PC-9 (cell line): ENCODE measurements at regions of chr5 and their contacts with region 1.

Region 1: DNA sequence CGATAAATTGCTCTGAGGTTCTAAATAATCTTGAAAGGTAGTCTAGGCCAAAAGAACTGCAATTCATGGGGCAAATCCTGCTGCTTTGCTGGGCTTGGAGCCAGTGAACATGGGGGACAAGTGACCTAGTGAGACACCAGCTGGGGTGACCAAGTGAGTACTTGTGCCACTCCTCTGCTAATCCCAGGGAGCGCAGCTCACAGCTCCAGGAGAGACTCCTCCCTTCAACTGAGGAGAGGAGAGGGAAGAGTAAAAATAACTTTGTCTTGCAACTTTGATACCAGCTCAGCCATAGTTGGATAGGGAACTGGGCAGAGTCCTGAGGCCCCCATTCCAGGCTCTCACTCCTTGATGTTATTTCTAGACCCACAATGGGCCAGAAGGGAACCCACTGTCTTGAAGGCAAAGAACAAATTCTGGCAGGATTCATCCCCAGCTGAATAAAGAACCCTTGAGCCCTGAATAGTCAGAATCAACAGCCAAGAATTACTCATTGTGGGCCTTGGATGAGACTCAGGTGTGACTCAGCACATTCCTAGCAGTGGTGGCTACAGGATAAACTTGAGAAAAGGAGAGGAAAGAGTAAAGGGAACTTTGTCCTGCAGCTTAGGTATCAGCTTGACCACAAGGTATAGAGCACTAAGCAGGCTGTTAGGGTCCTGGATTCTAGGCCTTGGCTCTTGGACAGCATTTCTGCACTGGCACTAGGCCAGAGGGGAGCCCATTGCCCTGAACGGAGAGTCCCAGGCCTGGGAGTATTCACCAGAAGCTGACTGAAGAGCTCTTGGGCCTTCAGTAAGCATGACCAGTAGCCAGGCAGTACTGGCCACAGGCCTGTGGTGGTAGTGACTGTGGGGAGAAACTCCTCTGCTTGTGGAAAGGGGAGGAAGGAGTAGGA is 288.3 kb upstream of the CDH18 start:
- DNase-seq: peak; percentile 77 to 80
- H3K4me3 ChIP-seq: no peak overlapping the region
- H3K27ac ChIP-seq: peak overlapping the region; percentile 84
- H3K4me1 ChIP-seq: peaks cover 23% of the 10 kb centered on the region
- H3K27me3 ChIP-seq: no peaks in the 10 kb centered on the region
- CTCF ChIP-seq: no peak

Region 2: DNA sequence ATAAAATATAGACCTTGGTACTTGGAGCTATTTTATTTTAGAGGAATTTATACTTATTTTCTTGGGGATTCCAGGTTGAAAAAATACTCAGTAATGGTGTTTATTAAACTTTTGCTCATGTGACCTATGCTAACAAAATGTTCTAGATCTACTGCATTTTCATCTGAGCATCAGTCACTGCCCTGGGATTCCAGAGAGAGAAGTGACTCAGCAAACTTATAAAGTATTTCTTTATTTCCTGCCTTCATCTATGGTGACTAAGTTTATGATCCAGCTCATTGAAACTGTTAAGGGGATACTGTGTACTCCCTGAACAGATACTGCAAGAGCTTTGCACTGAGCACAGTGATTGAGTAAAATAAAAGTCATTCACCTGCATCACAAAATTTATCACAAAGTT is 10.2 kb after region 1 on chr5:
- CTCF ChIA-PET with region 1: no interaction called
- POLR2A ChIA-PET with region 1: no interaction called
- intact Hi-C with region 1: loop called (anchors 1 kb)
- DNase-seq: peak; percentile 16 to 65
- H3K4me3 ChIP-seq: no peak overlapping the region
- H3K27ac ChIP-seq: peak overlapping the region; percentile 60
- H3K4me1 ChIP-seq: 0 out of 2 replicates have a peak, but pooled peaks cover 6% of the 10 kb centered on the region
- H3K27me3 ChIP-seq: no peaks in the 10 kb centered on the region
- CTCF ChIP-seq: no peak

Region 3: GRCh38 chr5:20300110-20300509 is 23.8 kb after region 1 on chr5:
- CTCF ChIA-PET with region 1: no interaction called
- POLR2A ChIA-PET with region 1: no interaction called
- intact Hi-C with region 1: no loop called
- DNase-seq: no peak
- H3K4me3 ChIP-seq: no peak overlapping the region
- H3K27ac ChIP-seq: no peak overlapping the region
- H3K4me1 ChIP-seq: no peaks in the 10 kb centered on the region
- H3K27me3 ChIP-seq: no peaks in the 10 kb centered on the region
- CTCF ChIP-seq: no peak

Region 4: GRCh38 chr5:20353499-20353898 is 77.2 kb after region 1 on chr5:
- CTCF ChIA-PET with region 1: no interaction called
- POLR2A ChIA-PET with region 1: interaction called, 3 read pairs
- intact Hi-C with region 1: loop called (anchors 1 kb)
- DNase-seq: peak; percentile 59 to 73
- H3K4me3 ChIP-seq: no peak overlapping the region
- H3K27ac ChIP-seq: no peak overlapping the region
- H3K4me1 ChIP-seq: 0 out of 2 replicates have a peak, but pooled peaks cover 6% of the 10 kb centered on the region
- H3K27me3 ChIP-seq: no peaks in the 10 kb centered on the region
- CTCF ChIP-seq: no peak